Heart right ventricle (tissue), 16 donors: ENCODE measurements at regions of chr3 and their contacts with region 1.

Region 1: DNA sequence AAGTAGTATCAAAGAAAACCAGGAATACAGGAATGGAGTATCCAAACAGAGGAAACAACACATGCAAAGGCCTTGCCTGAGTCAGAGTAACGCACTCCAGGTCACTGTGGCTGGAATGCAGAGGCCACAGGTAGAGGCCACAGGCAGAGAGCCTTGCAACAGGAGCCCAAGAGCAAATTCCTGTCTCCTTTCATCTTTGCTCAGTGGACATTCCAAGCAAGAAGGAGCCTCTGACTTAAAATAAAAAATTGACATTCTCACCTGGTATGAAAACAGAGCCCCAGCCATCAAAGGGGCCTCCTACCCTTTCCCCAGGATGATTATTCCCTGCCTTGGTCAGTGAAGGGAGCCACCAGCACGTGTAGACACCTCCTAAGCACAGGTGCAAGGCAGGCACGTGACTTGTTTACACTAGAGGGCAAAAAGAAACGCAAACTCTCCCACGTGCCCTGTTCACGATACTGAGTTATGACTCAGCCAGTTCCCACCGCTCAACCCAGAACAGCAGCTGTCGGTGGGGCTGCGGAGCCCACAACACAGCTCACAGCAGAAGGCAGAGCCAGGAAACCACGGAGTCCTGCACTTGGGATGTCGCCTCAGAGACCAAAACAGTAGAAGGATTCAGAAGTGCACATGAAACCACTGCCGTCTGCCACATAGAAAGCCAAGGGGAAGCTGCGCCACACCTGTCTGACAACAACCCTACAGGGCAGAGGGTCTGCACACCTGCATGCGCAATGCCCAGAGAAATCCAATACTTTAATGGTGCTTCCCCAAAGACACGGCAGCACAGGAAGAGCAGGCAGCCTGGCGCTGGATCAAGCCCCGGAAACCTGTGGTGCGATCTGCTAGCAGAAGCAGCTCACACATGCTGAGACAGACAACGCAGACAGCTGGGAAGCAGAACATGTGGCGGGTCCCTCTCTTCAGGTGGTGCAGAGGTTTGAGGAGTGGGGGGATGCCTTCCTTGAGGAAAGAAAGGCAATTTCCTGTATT is 52.1 kb downstream of the ITGB5 start:
- DNase-seq: peak in 1 of 2 donors; percentile 70
- ATAC-seq: peak in 7 of 8 donors; percentile 22 to 60 (median 48)
- H3K4me3 ChIP-seq: peak overlapping the region in 3 of 10 donors; percentile 2 to 4 (median 3)
- H3K27ac ChIP-seq: peak overlapping the region; percentile 32 to 83 (median 77)
- H3K4me1 ChIP-seq: peaks cover 34 to 99% (median 82%) of the 10 kb centered on the region in 9 donors
- H3K27me3 ChIP-seq: no peaks in the 10 kb centered on the region
- CTCF ChIP-seq: no peak

Region 2: GRCh38 chr3:124772081-124772831 is 62.8 kb before region 1 on chr3:
- intact Hi-C with region 1: loop called in 1 of 10 experiments (anchors 10 kb)
- DNase-seq: peak; percentile 47 to 70
- ATAC-seq: peak; percentile 7 to 65 (median 54)
- H3K4me3 ChIP-seq: no peak overlapping the region
- H3K27ac ChIP-seq: peak overlapping the region; percentile 2 to 83 (median 66)
- H3K4me1 ChIP-seq: peaks cover 17 to 83% (median 71%) of the 10 kb centered on the region in 9 donors
- H3K27me3 ChIP-seq: no peaks in the 10 kb centered on the region
- CTCF ChIP-seq: no peak

Region 3: GRCh38 chr3:124786441-124787241 is 48.4 kb before region 1 on chr3:
- intact Hi-C with region 1: loop called in 3 of 10 experiments (anchors 10 kb)
- DNase-seq: no peak
- ATAC-seq: peak; percentile 6 to 64 (median 47)
- H3K4me3 ChIP-seq: no peak overlapping the region
- H3K27ac ChIP-seq: peak overlapping the region; percentile 28 to 80 (median 70)
- H3K4me1 ChIP-seq: peaks cover 35 to 83% (median 69%) of the 10 kb centered on the region in 9 donors
- H3K27me3 ChIP-seq: no peaks in the 10 kb centered on the region
- CTCF ChIP-seq: peak in 8 of 9 donors; percentile 23 to 68 (median 51)

Region 4: GRCh38 chr3:124797426-124797945 is 37.5 kb before region 1 on chr3:
- intact Hi-C with region 1: no loop called
- DNase-seq: no peak
- ATAC-seq: no peak
- H3K4me3 ChIP-seq: no peak overlapping the region
- H3K27ac ChIP-seq: no peak overlapping the region
- H3K4me1 ChIP-seq: peaks cover 22 to 55% (median 45%) of the 10 kb centered on the region in 9 donors
- H3K27me3 ChIP-seq: no peaks in the 10 kb centered on the region
- CTCF ChIP-seq: no peak